ENCODE measurements at regions of chr2 and their contacts with region 1.

Region 1: DNA sequence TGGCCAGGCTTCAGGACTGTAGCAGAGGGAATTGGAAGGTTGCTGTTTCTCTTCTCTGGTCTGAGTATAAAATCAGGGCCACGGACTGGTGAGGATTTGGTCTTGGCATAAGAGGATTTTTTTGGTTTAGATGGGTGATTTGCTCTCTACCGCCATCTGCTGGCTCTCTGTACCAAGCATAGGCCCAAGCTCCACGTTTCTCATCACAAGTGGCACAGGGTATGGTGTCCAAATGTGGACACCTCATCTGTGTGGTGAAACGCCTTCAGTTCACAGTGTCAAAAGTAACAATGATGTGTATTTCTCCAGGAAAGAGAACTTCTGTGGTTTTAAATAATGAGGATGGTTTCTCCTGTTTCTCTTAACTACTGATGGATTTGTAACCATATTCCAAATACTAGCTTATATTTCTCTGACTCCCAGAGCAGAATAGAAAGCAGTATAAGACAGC is 115.1 kb downstream of the EML6 start:
- DNase-seq: peak; percentile 80
- H3K4me3 Mint-ChIP-seq: no peak overlapping the region
- H3K27ac Mint-ChIP-seq: no peak overlapping the region
- H3K4me1 Mint-ChIP-seq: no peaks in the 10 kb centered on the region
- H3K27me3 Mint-ChIP-seq: no peaks in the 10 kb centered on the region

Region 2: DNA sequence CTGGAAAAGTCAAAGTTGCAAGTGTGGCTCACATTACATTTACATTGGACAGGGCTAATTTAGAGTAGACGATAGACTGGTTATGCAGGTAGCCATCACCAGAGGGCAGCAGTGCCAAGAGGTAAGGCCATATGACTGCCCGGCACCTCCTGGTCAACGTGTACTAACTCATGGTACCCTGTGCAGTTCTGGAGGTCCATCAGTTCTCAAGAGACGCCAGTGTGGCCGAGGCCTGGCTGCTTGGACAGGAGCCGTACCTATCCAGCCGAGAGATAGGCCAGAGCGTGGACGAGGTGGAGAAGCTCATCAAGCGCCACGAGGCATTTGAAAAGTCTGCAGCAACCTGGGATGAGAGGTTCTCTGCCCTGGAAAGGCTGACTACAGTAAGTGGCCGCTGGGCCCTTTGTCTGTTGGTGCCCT is 180.9 kb before region 1 on chr2:
- CTCF ChIA-PET with region 1: interaction called, 3 read pairs
- intact Hi-C with region 1: loop called (anchors 2 kb)
- DNase-seq: peak; percentile 58
- H3K4me3 Mint-ChIP-seq: no peak overlapping the region
- H3K27ac Mint-ChIP-seq: peak overlapping the region; percentile 60
- H3K4me1 Mint-ChIP-seq: peaks cover 18% of the 10 kb centered on the region
- H3K27me3 Mint-ChIP-seq: no peaks in the 10 kb centered on the region

Region 3: GRCh38 chr2:54716375-54716774 is 122.2 kb before region 1 on chr2:
- CTCF ChIA-PET with region 1: no interaction called
- intact Hi-C with region 1: no loop called
- DNase-seq: no peak
- H3K4me3 Mint-ChIP-seq: no peak overlapping the region
- H3K27ac Mint-ChIP-seq: no peak overlapping the region
- H3K4me1 Mint-ChIP-seq: no peaks in the 10 kb centered on the region
- H3K27me3 Mint-ChIP-seq: peaks cover 15% of the 10 kb centered on the region

Region 4: GRCh38 chr2:54763636-54764291 is 74.8 kb before region 1 on chr2:
- CTCF ChIA-PET with region 1: interaction called, 4 read pairs
- intact Hi-C with region 1: loop called (anchors 2 kb)
- DNase-seq: peak; percentile 53
- H3K4me3 Mint-ChIP-seq: no peak overlapping the region
- H3K27ac Mint-ChIP-seq: no peak overlapping the region
- H3K4me1 Mint-ChIP-seq: peaks cover 12% of the 10 kb centered on the region
- H3K27me3 Mint-ChIP-seq: no peaks in the 10 kb centered on the region

Region 5: DNA sequence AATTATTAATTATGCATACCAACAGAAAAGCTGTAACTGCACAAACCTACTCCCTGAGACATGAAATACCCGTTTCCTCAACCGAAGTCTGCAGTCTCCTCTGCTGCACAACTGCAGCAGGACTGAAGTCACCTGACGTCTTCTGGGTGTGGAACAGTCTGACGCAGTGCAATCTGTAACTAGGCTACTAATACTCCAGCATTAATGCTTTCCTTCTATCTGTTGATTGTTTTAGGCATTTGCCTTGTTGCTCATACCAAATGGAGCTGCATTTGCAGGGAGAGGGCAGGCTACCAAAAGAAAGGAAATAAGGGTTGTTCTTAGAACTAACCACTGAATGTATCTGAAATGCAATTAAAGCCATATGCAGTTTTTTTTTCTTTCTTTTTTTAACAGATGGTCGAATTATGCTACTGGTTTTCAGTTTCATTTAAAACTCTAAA is 171.6 kb after region 1 on chr2:
- CTCF ChIA-PET with region 1: interaction called, 3 read pairs
- intact Hi-C with region 1: loop called (anchors 5 kb)
- DNase-seq: peak; percentile 54
- H3K4me3 Mint-ChIP-seq: peak overlapping the region; percentile 77
- H3K27ac Mint-ChIP-seq: peak overlapping the region; percentile 55
- H3K4me1 Mint-ChIP-seq: peaks cover 56% of the 10 kb centered on the region
- H3K27me3 Mint-ChIP-seq: no peaks in the 10 kb centered on the region

Region 6: GRCh38 chr2:55175254-55176025 is 336.8 kb after region 1 on chr2:
- CTCF ChIA-PET with region 1: interaction called, 11 read pairs
- intact Hi-C with region 1: loop called (anchors 1 kb)
- DNase-seq: no peak
- H3K4me3 Mint-ChIP-seq: no peak overlapping the region
- H3K27ac Mint-ChIP-seq: no peak overlapping the region
- H3K4me1 Mint-ChIP-seq: peaks cover 7% of the 10 kb centered on the region
- H3K27me3 Mint-ChIP-seq: no peaks in the 10 kb centered on the region